HEK293T (cell line): ENCODE measurements at regions of chr9 and their contacts with region 1.

Region 1: GRCh38 chr9:136363606-136364370 is at the start of gene DNLZ:
- DNase-seq: peak; percentile 93

Region 2: DNA sequence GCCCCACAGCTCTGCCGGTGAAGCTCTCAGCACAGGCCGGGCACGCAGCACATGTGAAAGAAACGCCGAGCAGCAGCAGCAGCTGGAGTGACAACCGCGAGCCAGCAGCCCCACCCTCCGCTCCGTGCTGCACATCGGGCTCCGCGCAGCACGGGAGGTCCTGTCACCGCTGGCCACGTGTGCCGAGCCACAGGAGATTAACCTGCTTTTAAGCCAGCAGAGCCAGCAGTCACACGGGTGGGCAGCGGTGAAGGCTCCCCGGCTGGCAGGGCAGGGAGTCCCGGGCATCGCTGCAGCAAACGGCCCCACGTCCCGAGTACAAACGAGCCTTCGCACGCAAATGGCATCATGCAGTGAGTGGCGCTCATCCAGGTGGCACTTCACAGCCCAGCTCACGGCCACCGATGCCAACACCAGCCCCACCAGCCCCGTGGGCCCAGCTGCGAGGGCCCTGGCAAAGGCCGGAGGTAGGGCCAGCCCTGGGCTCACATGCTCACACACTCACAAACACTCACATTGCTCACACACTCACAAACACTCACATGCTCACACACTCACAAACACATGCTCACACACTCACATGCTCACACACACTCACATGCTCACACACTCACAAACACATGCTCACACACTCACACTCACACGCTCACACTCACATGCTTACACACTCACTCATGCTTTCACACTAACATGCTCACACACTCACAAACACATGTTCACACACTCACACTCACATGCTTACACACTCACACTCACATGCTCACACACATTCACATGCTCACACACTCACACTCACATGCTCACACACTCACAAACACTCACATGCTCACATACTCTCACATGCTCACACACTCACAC is 71.0 kb before region 1 on chr9:
- CTCF ChIA-PET with region 1: no interaction called
- POLR2A ChIA-PET with region 1: no interaction called
- DNase-seq: no peak

Region 3: GRCh38 chr9:136389396-136389795 is 25.6 kb after region 1 on chr9:
- CTCF ChIA-PET with region 1: no interaction called
- POLR2A ChIA-PET with region 1: interaction called, 10 read pairs
- DNase-seq: no peak

Region 4: GRCh38 chr9:136429683-136430590 is 66.1 kb after region 1 on chr9:
- CTCF ChIA-PET with region 1: no interaction called
- POLR2A ChIA-PET with region 1: no interaction called
- DNase-seq: no peak

Region 5: DNA sequence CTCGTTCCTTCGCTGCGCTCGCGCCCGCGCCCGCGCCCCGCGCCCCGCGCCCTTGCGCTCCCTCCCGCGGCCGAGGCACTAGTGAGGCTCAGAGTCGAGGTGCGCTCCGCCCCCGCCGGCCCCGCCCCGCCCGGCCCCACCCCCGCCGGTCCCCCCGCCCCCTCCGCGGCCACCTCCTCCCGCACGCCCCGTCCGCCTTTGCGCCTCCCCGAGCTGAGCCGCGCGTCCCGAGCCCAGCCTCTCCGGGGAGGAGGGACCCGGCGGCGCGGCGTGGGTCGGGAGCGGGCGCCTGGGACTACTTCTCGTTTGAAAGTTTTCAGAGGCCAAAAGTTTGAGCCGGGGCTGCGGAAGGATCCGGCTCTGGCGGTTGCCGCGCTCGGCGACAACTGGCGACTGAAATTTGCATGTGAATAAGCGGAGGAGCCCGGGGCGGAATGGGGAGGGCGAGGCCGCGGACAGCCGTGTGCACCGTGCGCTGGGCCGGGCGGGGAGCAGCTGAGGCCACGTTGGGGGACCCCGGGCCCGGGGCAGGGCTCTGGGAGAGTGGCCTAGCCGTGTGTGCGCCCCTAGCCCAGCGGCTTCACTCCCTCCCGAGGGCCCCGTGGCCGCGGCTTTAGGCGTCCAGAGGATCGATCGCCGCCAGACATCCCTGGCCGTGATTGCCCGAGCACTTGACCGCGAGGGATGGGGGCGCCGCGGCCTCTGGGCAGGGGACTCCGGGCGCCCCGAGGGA is 182.3 kb after region 1 on chr9 and contains the start of gene NOTCH1:
- CTCF ChIA-PET with region 1: no interaction called
- POLR2A ChIA-PET with region 1: no interaction called
- DNase-seq: peak; percentile 89